HCT116 (cell line): ENCODE measurements at regions of chr13 and their contacts with region 1.

Region 1: DNA sequence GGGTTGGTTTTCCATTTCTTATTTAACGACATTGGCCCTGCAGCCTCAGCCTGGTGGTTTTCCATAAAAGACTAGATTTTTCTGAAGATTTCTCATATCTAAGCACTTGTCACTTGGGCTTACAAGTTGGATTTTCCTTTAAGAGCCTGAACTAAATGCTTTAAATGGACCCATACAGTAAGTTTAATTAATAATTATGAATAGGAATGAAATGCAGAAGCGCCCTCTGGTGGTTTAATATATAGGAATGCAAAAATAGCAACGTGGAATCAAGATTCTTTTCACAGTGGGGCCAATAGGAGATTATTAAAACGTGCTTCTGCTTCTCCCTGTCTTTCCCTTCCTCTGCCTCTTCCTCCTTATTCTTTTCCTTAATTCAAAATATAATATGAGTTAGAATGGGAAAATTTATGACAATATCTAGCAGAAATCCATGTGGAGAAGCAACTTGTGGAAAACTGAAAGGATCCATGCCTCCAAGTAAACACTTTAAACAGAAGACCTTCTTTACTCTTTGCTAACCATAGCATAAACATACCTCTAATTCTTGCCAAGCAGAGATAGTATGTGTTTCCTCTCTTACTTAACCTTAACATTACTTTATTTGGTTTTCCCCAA is 324.0 kb downstream of the GPC5 start:
- DNase-seq: no peak
- ATAC-seq: no peak
- H3K4me3 ChIP-seq: no peak overlapping the region
- H3K27ac ChIP-seq: no peak overlapping the region
- H3K4me1 ChIP-seq: no peaks in the 10 kb centered on the region
- H3K27me3 ChIP-seq: no peaks in the 10 kb centered on the region
- CTCF ChIP-seq: peak; percentile 3 to 54 (median 29); a peak in 3 of 6 replicates
- POLR2A ChIP-seq: no peak
- RAD21 ChIP-seq: no peak

Region 2: GRCh38 chr13:91381371-91381770 is 341.0 kb before region 1 on chr13:
- CTCF ChIA-PET with region 1: interaction called, 11 read pairs
- POLR2A ChIA-PET with region 1: no interaction called
- RAD21 ChIA-PET with region 1: no interaction called
- intact Hi-C with region 1: loop called (anchors 1 kb)
- DNase-seq: no peak
- ATAC-seq: no peak
- H3K4me3 ChIP-seq: no peak overlapping the region
- H3K27ac ChIP-seq: no peak overlapping the region
- H3K4me1 ChIP-seq: no peaks in the 10 kb centered on the region
- H3K27me3 ChIP-seq: peaks cover 17% of the 10 kb centered on the region; the same call in 1 of the 2 replicates
- CTCF ChIP-seq: peak in 2 of 3 experiments; percentile 18 to 37; a peak in 3 of 6 replicates
- POLR2A ChIP-seq: no peak
- RAD21 ChIP-seq: 0 out of 2 replicates have a peak, but pooled peaks have one; percentile 16

Region 3: GRCh38 chr13:91797567-91797966 is 75.2 kb after region 1 on chr13:
- CTCF ChIA-PET with region 1: no interaction called
- POLR2A ChIA-PET with region 1: no interaction called
- RAD21 ChIA-PET with region 1: no interaction called
- intact Hi-C with region 1: no loop called
- DNase-seq: no peak
- ATAC-seq: no peak
- H3K4me3 ChIP-seq: no peak overlapping the region
- H3K27ac ChIP-seq: no peak overlapping the region
- H3K4me1 ChIP-seq: no peaks in the 10 kb centered on the region
- H3K27me3 ChIP-seq: no peaks in the 10 kb centered on the region
- CTCF ChIP-seq: no peak
- POLR2A ChIP-seq: no peak
- RAD21 ChIP-seq: no peak

Region 4: DNA sequence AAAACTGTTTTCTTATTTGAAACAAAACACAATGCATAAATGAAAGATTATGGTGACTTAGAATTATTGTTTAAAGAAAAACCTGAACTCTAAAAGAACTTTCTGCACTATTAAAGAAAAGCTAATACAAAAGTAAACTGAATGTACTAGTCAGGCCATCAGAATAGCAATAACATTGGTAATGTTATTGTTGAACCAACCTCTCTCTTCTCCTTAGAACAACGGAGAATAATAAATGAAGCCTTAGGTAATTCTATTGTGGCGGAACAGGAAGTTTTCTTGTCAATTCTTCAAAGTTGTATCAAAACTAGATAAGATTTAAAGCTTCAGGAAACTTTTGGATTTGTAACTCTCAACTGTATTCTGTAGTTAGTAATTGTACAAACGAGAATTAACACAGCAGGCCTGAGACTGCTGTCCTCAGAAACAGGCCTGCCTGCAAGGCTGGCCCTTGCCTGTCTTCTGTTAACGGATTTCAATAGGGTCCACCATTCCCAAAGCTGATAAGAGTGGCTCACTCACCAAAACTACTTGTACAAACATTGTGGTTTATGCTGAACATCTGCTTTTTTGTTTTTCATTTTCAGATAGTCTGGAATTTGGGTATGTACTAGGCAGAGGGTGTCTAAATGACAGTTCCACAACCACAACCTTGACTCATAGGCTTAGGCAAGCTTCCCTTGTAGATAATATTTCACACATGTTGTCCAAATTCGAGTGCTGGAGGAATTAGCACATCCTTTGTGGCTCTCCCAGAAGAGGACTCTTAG is 501.9 kb after region 1 on chr13:
- CTCF ChIA-PET with region 1: no interaction called
- POLR2A ChIA-PET with region 1: no interaction called
- RAD21 ChIA-PET with region 1: no interaction called
- intact Hi-C with region 1: no loop called
- DNase-seq: no peak
- ATAC-seq: no peak
- H3K4me3 ChIP-seq: no peak overlapping the region
- H3K27ac ChIP-seq: no peak overlapping the region
- H3K4me1 ChIP-seq: no peaks in the 10 kb centered on the region
- H3K27me3 ChIP-seq: no peaks in the 10 kb centered on the region
- CTCF ChIP-seq: no peak
- POLR2A ChIP-seq: no peak
- RAD21 ChIP-seq: no peak